A549 (cell line): ENCODE measurements at regions of chr1 and their contacts with region 1.

Region 1: GRCh38 chr1:235971571-235972310 is 93.1 kb downstream of the NID1 start:
- DNase-seq: peak; percentile 88
- ATAC-seq: peak; percentile 97 to 99
- H3K4me3 ChIP-seq: peak overlapping the region; percentile 25; the same call in 2 of the 3 replicates
- H3K27ac ChIP-seq: peak overlapping the region; percentile 69 to 82
- H3K4me1 ChIP-seq: peaks cover 13% of the 10 kb centered on the region
- CTCF ChIP-seq: peak; percentile 91
- EP300 ChIP-seq: no peak
- POLR2A ChIP-seq: no peak
- RAD21 ChIP-seq: peak; percentile 96 to 98

Region 2: GRCh38 chr1:235504496-235505222 is 467.1 kb before region 1 on chr1:
- CTCF ChIA-PET with region 1: interaction called, 11 read pairs
- POLR2A ChIA-PET with region 1: interaction called, 8 read pairs
- DNase-seq: peak; percentile 89 to 99
- ATAC-seq: peak; percentile 84 to 91
- H3K4me3 ChIP-seq: peak overlapping the region; percentile 82
- H3K27ac ChIP-seq: peak overlapping the region; percentile 89 to 97
- H3K4me1 ChIP-seq: peaks cover 19% of the 10 kb centered on the region
- CTCF ChIP-seq: peak; percentile 73
- EP300 ChIP-seq: no peak
- POLR2A ChIP-seq: peak; percentile 67
- RAD21 ChIP-seq: peak; percentile 42 to 48; a peak in 3 of 5 replicates

Region 3: DNA sequence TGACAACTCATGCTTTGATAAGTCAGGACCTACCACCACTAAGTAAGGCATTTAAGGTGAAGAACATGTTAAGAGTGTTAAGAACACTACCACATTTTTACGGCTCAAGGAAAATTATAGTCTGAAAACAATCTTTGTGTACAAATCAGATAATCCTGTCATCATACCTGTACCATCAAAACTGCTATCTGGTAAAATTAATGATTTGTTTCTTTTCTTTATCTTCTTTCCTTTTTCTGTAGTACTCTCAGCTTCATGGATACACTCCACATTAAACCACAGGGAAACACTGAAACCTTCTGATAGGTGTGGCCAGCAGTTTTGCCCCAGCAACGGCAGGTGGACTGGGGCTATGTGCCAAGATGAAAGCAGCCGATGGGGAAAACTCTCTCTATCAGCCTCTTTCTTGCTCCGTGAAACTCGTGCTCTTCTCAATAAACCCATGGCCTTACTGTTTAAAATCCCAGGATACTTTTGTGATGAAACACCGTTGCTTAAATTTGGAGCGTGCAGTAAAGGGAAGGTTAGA is 180.1 kb before region 1 on chr1:
- CTCF ChIA-PET with region 1: interaction called, 18 read pairs
- POLR2A ChIA-PET with region 1: no interaction called
- DNase-seq: no peak
- ATAC-seq: no peak
- H3K4me3 ChIP-seq: no peak overlapping the region
- H3K27ac ChIP-seq: no peak overlapping the region
- H3K4me1 ChIP-seq: peaks cover 4% of the 10 kb centered on the region; the same call in 1 of the 3 replicates
- CTCF ChIP-seq: no peak
- EP300 ChIP-seq: no peak
- POLR2A ChIP-seq: no peak
- RAD21 ChIP-seq: no peak

Region 4: DNA sequence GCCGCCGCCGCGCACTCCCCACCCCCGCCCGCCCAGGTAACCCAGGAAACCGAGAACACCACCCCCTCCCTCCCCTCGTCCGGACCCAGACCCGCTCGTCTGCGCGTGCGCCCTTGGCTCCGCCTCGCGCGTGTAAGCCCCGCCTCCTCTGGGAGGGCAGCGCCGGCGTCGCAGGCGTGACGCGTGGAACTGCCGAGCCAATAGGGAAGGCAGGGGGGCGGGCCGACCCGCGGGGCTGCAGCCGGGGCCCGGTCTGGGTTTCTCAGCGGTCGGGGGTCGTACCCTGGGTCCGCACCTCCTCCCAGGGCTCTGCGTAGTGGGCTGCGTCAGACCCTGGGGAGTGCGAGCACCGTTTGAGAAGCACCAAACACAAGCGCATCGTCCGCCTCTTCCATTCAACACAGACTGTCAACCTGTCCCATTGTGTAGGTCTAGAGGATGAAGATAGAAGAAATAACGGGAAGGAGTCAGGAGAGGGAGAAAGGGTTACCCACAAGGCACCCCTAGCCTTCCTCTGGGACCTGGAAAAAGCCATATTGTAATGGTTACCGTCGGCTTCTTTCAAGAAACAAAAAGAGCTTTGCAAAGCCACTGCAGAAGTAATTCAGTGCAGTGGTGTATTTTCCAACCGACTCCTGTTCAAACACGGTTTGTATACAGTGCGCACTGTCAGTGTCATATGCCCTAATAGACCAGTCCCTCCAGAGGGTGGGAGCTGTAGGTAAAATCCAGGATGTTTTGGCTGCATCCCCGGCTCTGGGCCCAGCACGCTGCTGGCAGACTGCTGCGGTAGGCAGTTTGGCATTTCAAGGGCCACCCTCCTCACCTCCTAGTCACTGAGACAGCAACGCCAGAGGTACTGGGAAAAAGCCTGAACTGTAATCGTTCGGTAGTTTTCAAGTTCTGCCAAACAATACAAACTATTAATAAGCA is 104.6 kb before region 1 on chr1:
- CTCF ChIA-PET with region 1: interaction called, 160 read pairs
- POLR2A ChIA-PET with region 1: interaction called, 19 read pairs
- DNase-seq: peak; percentile 83 to 94
- ATAC-seq: peak; percentile 89 to 90
- H3K4me3 ChIP-seq: peak overlapping the region; percentile 92
- H3K27ac ChIP-seq: peak overlapping the region; percentile 85 to 95
- H3K4me1 ChIP-seq: peaks cover 10% of the 10 kb centered on the region; the same call in 2 of the 3 replicates
- CTCF ChIP-seq: no peak
- EP300 ChIP-seq: no peak
- POLR2A ChIP-seq: peak; percentile 90
- RAD21 ChIP-seq: no peak; a peak in 1 of 5 replicates

Region 5: GRCh38 chr1:235917267-235917811 is 54.4 kb before region 1 on chr1:
- CTCF ChIA-PET with region 1: interaction called, 35 read pairs
- POLR2A ChIA-PET with region 1: interaction called, 12 read pairs
- DNase-seq: peak; percentile 84 to 92
- ATAC-seq: peak; percentile 83 to 90
- H3K4me3 ChIP-seq: no peak overlapping the region
- H3K27ac ChIP-seq: peak overlapping the region; percentile 78 to 87
- H3K4me1 ChIP-seq: peaks cover 58% of the 10 kb centered on the region
- CTCF ChIP-seq: no peak
- EP300 ChIP-seq: peak; percentile 81 to 82; a peak in 2 of 5 replicates
- POLR2A ChIP-seq: no peak
- RAD21 ChIP-seq: peak; percentile 28 to 46; a peak in 3 of 5 replicates

Region 6: GRCh38 chr1:235946571-235946981 is 25.2 kb before region 1 on chr1:
- CTCF ChIA-PET with region 1: interaction called, 25 read pairs
- POLR2A ChIA-PET with region 1: no interaction called
- DNase-seq: no peak
- ATAC-seq: peak; percentile 51 to 76; a peak in 4 of 6 replicates
- H3K4me3 ChIP-seq: no peak overlapping the region
- H3K27ac ChIP-seq: no peak overlapping the region
- H3K4me1 ChIP-seq: no peaks in the 10 kb centered on the region
- CTCF ChIP-seq: peak; percentile 42
- EP300 ChIP-seq: no peak
- POLR2A ChIP-seq: no peak
- RAD21 ChIP-seq: peak; percentile 67 to 74

Region 7: DNA sequence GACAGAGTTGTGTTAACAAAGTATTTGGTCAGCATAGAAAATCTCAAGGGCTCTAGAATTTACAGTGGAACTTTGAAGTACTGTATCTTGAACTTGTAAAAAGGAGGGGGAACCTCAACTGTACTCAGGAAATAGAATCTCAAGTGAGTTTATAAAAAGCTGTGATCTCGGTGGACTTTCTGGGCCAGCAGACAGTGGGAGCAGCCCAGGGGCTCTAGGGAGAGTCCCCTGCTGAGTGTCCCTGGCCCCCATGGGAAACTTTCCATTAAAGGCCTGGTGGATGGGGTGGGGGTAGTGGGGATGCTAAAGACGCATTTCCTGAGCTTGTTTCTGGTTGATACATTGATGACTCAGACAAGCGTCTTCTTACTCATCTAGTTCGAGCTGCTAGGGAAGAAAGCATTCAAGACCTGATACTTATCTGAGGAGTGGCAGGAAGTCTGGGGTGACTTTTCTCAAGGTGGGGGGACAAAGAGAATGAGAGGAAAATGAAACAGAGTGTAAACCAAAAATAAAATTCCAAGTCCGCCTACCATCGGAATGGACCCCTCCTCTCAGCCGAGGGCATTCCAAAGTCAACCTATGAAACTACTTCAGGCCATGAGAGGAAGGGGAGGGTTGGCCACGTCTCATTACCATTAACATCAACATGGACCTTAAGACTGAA is 27.7 kb after region 1 on chr1:
- CTCF ChIA-PET with region 1: interaction called, 24 read pairs
- POLR2A ChIA-PET with region 1: interaction called, 7 read pairs
- DNase-seq: peak; percentile 36 to 81
- ATAC-seq: peak; percentile 85 to 87
- H3K4me3 ChIP-seq: no peak overlapping the region
- H3K27ac ChIP-seq: peak overlapping the region; percentile 70 to 84
- H3K4me1 ChIP-seq: peaks cover 27% of the 10 kb centered on the region
- CTCF ChIP-seq: no peak
- EP300 ChIP-seq: peak in 1 of 2 experiments; percentile 26; a peak in 1 of 5 replicates
- POLR2A ChIP-seq: no peak
- RAD21 ChIP-seq: no peak

Region 8: DNA sequence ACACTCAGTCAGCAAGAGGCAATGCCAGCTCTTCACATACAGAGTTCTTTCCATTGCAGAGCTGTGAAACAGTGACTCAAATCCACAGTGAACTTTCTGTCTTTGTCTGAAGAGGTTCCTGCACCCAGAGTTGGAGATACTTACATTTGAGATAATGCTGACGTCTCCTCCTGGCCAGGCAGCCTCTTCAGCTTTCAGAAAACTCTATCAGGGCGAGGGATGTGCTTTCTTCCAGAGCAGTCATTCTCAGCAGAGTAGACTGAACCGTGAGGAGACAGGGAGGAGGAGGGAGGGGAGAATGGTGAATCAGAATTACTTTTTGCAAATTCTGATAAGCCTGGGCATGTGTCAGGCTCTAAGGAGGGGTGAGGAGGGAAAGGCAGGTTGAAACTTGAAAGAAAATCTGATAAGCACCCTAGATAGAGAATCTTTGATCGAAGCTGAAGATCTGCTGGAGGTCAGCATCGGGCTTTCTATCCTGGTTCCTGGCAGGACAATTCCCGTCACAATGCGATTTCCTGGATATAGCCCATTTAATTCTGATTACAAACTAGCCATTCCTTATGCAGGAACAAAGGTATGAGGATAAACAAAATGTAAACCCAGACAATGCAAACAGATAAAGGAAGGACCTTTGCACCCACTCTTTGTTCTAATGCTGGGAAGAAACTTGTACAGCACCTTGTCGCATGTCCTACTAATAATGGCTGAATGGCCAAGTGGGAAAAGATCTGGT is 112.1 kb after region 1 on chr1:
- CTCF ChIA-PET with region 1: no interaction called
- POLR2A ChIA-PET with region 1: no interaction called
- DNase-seq: no peak
- ATAC-seq: peak; percentile 28 to 58; a peak in 4 of 6 replicates
- H3K4me3 ChIP-seq: no peak overlapping the region
- H3K27ac ChIP-seq: 0 out of 6 replicates have a peak overlapping the region, but pooled peaks of 1 of the 2 experiments have one; percentile 9
- H3K4me1 ChIP-seq: peaks cover 7% of the 10 kb centered on the region; the same call in 1 of the 3 replicates
- CTCF ChIP-seq: no peak
- EP300 ChIP-seq: no peak
- POLR2A ChIP-seq: no peak
- RAD21 ChIP-seq: no peak